ENCODE measurements at regions of chr4 and their contacts with region 1.

Region 1: DNA sequence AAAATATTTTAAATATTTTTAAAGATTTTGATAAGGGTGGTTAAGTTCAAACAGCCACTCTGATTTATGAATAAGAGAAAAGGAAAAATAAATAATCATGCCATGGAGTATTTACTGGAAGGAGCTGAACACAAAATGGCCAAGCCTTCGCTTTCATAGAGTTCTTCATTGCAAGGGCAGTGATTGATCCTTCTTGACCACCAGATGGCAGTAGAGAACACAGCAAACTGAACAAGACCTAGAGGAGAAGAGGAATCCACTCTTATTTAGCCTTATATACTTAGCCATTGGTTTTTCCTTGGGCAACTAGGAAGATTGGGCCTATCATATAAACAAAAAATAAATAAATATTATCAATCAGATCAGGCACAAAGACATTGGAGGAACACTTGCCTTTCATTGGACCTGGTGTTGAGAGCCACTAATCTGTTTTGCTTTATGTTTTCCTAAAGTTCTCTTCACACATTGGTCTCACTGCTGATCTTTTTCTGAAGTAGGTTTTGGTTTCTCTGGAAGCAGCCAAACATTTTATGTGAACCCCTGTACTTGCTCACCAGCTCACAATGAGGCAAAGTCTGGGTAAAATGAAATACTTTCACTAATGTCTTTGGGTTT is 58.1 kb upstream of the PARM1 start:
- DNase-seq: peak; percentile 51
- H3K27ac ChIP-seq: no peak overlapping the region
- CTCF ChIP-seq: peak; percentile 88

Region 2: GRCh38 chr4:74886490-74886889 is 11.6 kb after region 1 on chr4:
- CTCF ChIA-PET with region 1: interaction called, 12 read pairs
- POLR2A ChIA-PET with region 1: no interaction called
- DNase-seq: peak; percentile 91
- H3K27ac ChIP-seq: no peak overlapping the region
- CTCF ChIP-seq: no peak

Region 3: GRCh38 chr4:74897386-74897785 is 22.5 kb after region 1 on chr4:
- CTCF ChIA-PET with region 1: no interaction called
- POLR2A ChIA-PET with region 1: no interaction called
- DNase-seq: no peak
- H3K27ac ChIP-seq: no peak overlapping the region
- CTCF ChIP-seq: no peak